OCI-LY7 (cell line): ENCODE measurements at regions of chr1 and their contacts with region 1.

Region 1: DNA sequence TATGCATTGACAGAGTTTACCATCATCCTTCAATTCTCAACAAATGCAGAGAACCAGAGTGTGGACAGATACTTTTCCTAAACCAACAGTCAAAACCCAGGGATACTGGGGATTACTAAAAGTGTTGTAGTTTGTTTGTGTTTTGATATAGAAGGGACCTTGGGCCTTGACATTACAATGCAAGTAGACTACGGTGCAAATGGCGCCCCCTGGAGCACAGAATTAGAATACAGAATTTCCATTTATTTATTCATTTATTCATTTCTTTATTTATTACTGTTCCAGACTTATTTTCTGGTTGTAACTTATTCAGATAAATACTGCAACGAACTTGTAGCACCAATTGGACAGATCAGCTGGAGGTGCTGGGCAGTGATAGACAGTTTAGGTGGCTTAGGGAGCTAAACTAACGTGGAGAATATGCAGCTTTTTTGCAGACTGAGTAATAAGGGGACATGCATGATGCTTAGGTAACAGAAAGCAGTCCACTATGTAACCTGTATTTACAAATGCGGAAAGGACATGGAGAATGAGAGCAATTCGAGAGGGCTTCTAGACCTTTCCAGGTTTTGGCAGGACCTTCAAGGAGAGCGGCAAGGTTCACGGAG is 42.6 kb downstream of the KIRREL1 start:
- DNase-seq: peak; percentile 30
- H3K4me3 ChIP-seq: no peak overlapping the region
- H3K27ac ChIP-seq: no peak overlapping the region
- H3K4me1 ChIP-seq: no peaks in the 10 kb centered on the region
- CTCF ChIP-seq: peak; percentile 89

Region 2: GRCh38 chr1:157969697-157970485 is 66.2 kb before region 1 on chr1:
- CTCF ChIA-PET with region 1: no interaction called
- POLR2A ChIA-PET with region 1: no interaction called
- intact Hi-C with region 1: loop called (anchors 10 kb)
- DNase-seq: peak; percentile 34
- H3K4me3 ChIP-seq: no peak overlapping the region
- H3K27ac ChIP-seq: no peak overlapping the region
- H3K4me1 ChIP-seq: no peaks in the 10 kb centered on the region
- CTCF ChIP-seq: peak; percentile 90

Region 3: GRCh38 chr1:157992031-157992832 is 43.8 kb before region 1 on chr1:
- CTCF ChIA-PET with region 1: no interaction called
- POLR2A ChIA-PET with region 1: no interaction called
- intact Hi-C with region 1: loop called (anchors 5 kb)
- DNase-seq: peak; percentile 53
- H3K4me3 ChIP-seq: no peak overlapping the region
- H3K27ac ChIP-seq: no peak overlapping the region
- H3K4me1 ChIP-seq: no peaks in the 10 kb centered on the region
- CTCF ChIP-seq: peak; percentile 95

Region 4: GRCh38 chr1:158002631-158003405 is 33.3 kb before region 1 on chr1:
- CTCF ChIA-PET with region 1: no interaction called
- POLR2A ChIA-PET with region 1: no interaction called
- intact Hi-C with region 1: no loop called
- DNase-seq: no peak
- H3K4me3 ChIP-seq: no peak overlapping the region
- H3K27ac ChIP-seq: no peak overlapping the region
- H3K4me1 ChIP-seq: no peaks in the 10 kb centered on the region
- CTCF ChIP-seq: no peak